H1 (cell line): ENCODE measurements at regions of chr7 and their contacts with region 1.

Region 1: GRCh38 chr7:18508443-18509427 is 13.2 kb downstream of the HDAC9 start:
- DNase-seq: no peak
- H3K4me3 ChIP-seq: no peak overlapping the region
- H3K27ac ChIP-seq: no peak overlapping the region
- H3K4me1 ChIP-seq: peaks cover 3 to 9% (median 4%) of the 10 kb centered on the region in 4 experiments; a peak in 4 of 7 replicates
- H3K27me3 ChIP-seq: no peaks in the 10 kb centered on the region
- CTCF ChIP-seq: no peak
- EP300 ChIP-seq: no peak
- POLR2A ChIP-seq: 0 out of 3 replicates have a peak, but pooled peaks of 1 of the 2 experiments have one; percentile 44
- RAD21 ChIP-seq: no peak

Region 2: DNA sequence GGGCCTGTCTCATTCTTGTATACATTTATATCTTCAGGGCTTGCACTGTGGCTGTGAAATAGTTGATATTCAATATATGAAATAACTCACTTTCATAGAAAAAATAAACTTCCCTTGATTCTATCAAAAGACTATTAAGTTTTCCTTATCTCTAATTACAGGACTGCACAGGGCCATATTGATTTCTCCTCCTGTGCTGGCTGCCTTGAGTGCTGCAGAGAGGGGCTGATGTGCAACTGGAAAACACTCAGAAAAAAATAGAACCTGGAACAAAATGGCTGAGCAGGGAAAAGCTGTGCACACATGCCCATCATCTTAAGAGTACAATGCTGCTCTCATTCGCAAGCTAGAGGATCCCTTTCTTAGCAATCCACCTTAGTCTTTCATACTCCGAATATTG is 19.1 kb before region 1 on chr7:
- CTCF ChIA-PET with region 1: interaction called, 32 read pairs
- POLR2A ChIA-PET with region 1: interaction called, 47 read pairs
- DNase-seq: no peak
- H3K4me3 ChIP-seq: no peak overlapping the region
- H3K27ac ChIP-seq: no peak overlapping the region
- H3K4me1 ChIP-seq: peaks cover 0 to 2% (median 0%) of the 10 kb centered on the region in 4 experiments; a peak in 1 of 7 replicates
- H3K27me3 ChIP-seq: no peaks in the 10 kb centered on the region
- CTCF ChIP-seq: no peak
- EP300 ChIP-seq: no peak
- POLR2A ChIP-seq: no peak
- RAD21 ChIP-seq: no peak

Region 3: GRCh38 chr7:18495412-18496340 is 13.1 kb before region 1 on chr7 and contains the start of gene HDAC9:
- CTCF ChIA-PET with region 1: interaction called, 32 read pairs
- POLR2A ChIA-PET with region 1: interaction called, 47 read pairs
- DNase-seq: peak in 1 of 2 experiments; percentile 57
- H3K4me3 ChIP-seq: peak within 1 kb of the TSS; percentile 32 to 68 (median 46)
- H3K27ac ChIP-seq: peak within 1 kb of the TSS; percentile 64; the same call in 1 of the 2 replicates
- H3K4me1 ChIP-seq: peaks cover 2 to 10% (median 9%) of the 10 kb centered on the region in 4 experiments; a peak in 4 of 7 replicates
- H3K27me3 ChIP-seq: no peaks in the 10 kb centered on the region
- CTCF ChIP-seq: no peak
- EP300 ChIP-seq: no peak
- POLR2A ChIP-seq: peak; percentile 86 to 97
- RAD21 ChIP-seq: no peak
- total RNA-seq, gene HDAC9: 9.4 and 13.1 TPM in 2 replicates

Region 4: GRCh38 chr7:18558503-18558902 is 49.8 kb after region 1 on chr7:
- CTCF ChIA-PET with region 1: no interaction called
- POLR2A ChIA-PET with region 1: no interaction called
- DNase-seq: no peak
- H3K4me3 ChIP-seq: no peak overlapping the region
- H3K27ac ChIP-seq: no peak overlapping the region
- H3K4me1 ChIP-seq: no peaks in the 10 kb centered on the region
- H3K27me3 ChIP-seq: no peaks in the 10 kb centered on the region
- CTCF ChIP-seq: no peak
- EP300 ChIP-seq: no peak
- POLR2A ChIP-seq: no peak
- RAD21 ChIP-seq: no peak

Region 5: GRCh38 chr7:18570890-18571478 is 62.2 kb after region 1 on chr7:
- CTCF ChIA-PET with region 1: no interaction called
- POLR2A ChIA-PET with region 1: no interaction called
- DNase-seq: no peak
- H3K4me3 ChIP-seq: no peak overlapping the region
- H3K27ac ChIP-seq: no peak overlapping the region
- H3K4me1 ChIP-seq: peaks cover 0 to 9% (median 2%) of the 10 kb centered on the region in 4 experiments; a peak in 4 of 7 replicates
- H3K27me3 ChIP-seq: no peaks in the 10 kb centered on the region
- CTCF ChIP-seq: peak in 2 of 3 experiments; percentile 18 to 31; a peak in 2 of 4 replicates
- EP300 ChIP-seq: no peak
- POLR2A ChIP-seq: no peak
- RAD21 ChIP-seq: peak; percentile 57 to 59

Region 6: GRCh38 chr7:18590744-18591340 is 82.1 kb after region 1 on chr7:
- CTCF ChIA-PET with region 1: no interaction called
- POLR2A ChIA-PET with region 1: no interaction called
- DNase-seq: no peak
- H3K4me3 ChIP-seq: no peak overlapping the region
- H3K27ac ChIP-seq: no peak overlapping the region
- H3K4me1 ChIP-seq: no peaks in the 10 kb centered on the region
- H3K27me3 ChIP-seq: no peaks in the 10 kb centered on the region
- CTCF ChIP-seq: peak in 1 of 3 experiments; percentile 62; a peak in 2 of 4 replicates
- EP300 ChIP-seq: no peak
- POLR2A ChIP-seq: no peak
- RAD21 ChIP-seq: peak; percentile 67